Panc1 (cell line): ENCODE measurements at regions of chr11 and their contacts with region 1.

Region 1: DNA sequence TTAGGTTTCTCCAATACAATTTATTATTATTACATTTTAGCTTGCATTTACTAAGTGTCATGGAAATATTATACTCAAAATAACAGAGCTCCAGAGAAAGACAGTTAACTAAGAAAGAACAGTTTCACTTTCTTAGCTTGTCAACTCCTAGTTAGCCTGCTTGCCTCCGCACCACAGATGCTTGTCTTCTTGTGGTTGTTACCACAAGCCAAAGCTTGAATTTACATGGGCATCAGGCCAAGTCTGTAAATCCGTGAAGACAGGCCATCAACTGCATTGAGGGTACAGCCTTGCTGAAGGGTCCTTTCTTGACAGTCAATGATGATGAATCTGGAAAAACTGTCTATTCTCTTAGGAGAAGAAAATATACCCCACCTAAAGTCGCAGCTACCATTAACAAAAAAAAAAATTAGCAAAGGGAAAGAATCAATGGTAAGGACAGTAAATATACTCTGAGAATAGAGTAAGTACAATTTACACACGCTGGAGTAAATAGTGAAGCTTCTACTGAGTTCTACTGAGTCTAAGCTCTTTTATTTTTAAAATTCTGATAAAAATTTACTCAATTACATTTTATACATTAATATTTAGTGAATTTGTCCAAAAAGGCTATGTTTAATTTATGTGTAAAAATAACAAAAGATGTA is 15.6 kb upstream of the DENND5A start:
- DNase-seq: no peak
- ATAC-seq: peak; percentile 51
- H3K4me3 ChIP-seq: no peak overlapping the region
- H3K27ac ChIP-seq: no peak overlapping the region
- H3K4me1 ChIP-seq: peaks cover 9% of the 10 kb centered on the region; the same call in 1 of the 2 replicates
- H3K27me3 ChIP-seq: no peaks in the 10 kb centered on the region
- CTCF ChIP-seq: no peak

Region 2: DNA sequence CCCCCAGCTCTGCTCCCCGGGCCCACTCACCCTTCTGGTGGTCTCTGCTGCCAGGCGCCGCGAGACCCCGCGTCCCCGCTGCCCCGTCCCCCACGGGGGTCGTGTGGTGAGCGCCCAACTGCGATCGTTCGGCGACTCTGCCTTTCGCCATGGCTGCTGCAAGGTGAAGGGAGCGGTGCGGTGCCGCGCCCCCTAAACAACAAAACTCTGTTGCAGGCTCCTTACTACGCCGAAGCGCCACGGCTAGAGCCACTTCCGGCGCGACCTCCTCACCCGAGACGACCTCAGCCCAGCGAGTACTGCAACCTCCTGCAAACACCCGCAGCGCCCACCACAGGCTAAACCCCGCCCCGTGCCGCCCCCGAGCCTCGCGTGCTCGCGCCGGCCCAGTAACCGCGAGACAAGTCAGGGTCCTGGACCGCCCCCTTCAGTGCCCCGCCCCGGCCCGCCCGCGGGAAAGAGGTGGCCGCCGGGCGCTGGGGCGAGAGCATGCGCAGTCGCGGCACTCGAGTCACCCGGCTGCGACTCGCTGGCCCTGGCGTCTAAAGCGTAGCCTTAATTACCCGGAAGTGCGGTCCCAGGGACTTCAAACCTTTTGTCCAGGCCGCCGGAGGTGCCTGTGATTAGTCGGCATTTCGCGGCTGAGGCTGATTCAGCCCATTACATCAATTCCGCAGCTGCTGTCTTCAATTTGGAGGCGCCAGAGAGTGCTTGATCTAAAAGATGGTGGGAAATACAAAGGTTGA is 33.7 kb after region 1 on chr11 and contains the start of gene TMEM41B:
- CTCF ChIA-PET with region 1: no interaction called
- POLR2A ChIA-PET with region 1: no interaction called
- in situ Hi-C with region 1: loop called (anchors 5 kb)
- intact Hi-C with region 1: no loop called
- DNase-seq: peak; percentile 97
- ATAC-seq: peak; percentile 98
- H3K4me3 ChIP-seq: peak within 1 kb of the TSS; percentile 83 to 91
- H3K27ac ChIP-seq: peak within 1 kb of the TSS; percentile 99
- H3K4me1 ChIP-seq: peaks cover 27% of the 10 kb centered on the region; the same call in 1 of the 2 replicates
- H3K27me3 ChIP-seq: no peaks in the 10 kb centered on the region
- CTCF ChIP-seq: no peak
- total RNA-seq, gene TMEM41B: 126 TPM